Naive thymus-derived CD4-positive, alpha-beta T cell (primary cell): ENCODE measurements at regions of chr5 and their contacts with region 1.

Region 1: GRCh38 chr5:141734501-141735230 is 52.6 kb upstream of the ARAP3 start:
- DNase-seq: peak in 6 of 9 donors; percentile 11 to 39 (median 22)
- ATAC-seq: no peak
- H3K4me3 ChIP-seq: no peak overlapping the region
- H3K4me3 Mint-ChIP-seq: no peak overlapping the region
- H3K27ac ChIP-seq: no peak overlapping the region
- H3K27ac Mint-ChIP-seq: no peak overlapping the region
- H3K4me1 ChIP-seq: no peaks in the 10 kb centered on the region
- H3K4me1 Mint-ChIP-seq: peaks cover 0 to under 1% (median 0%) of the 10 kb centered on the region in 7 donors
- H3K27me3 ChIP-seq: peaks cover 0 to 2% of the 10 kb centered on the region in 2 donors
- H3K27me3 Mint-ChIP-seq: peaks cover 9 to 51% (median 39%) of the 10 kb centered on the region in 5 donors

Region 2: GRCh38 chr5:141753971-141754713 is 19.5 kb after region 1 on chr5:
- CTCF ChIA-PET with region 1: no interaction called
- POLR2A ChIA-PET with region 1: no interaction called
- intact Hi-C with region 1: loop called in 1 of 2 experiments (anchors 1 kb)
- DNase-seq: peak in 4 of 9 donors; percentile 4 to 28 (median 12)
- ATAC-seq: no peak
- H3K4me3 ChIP-seq: no peak overlapping the region
- H3K4me3 Mint-ChIP-seq: peak overlapping the region in 1 of 10 donors; percentile 21
- H3K27ac ChIP-seq: no peak overlapping the region
- H3K27ac Mint-ChIP-seq: peak overlapping the region in 1 of 9 donors; percentile 67
- H3K4me1 ChIP-seq: no peaks in the 10 kb centered on the region
- H3K4me1 Mint-ChIP-seq: peaks cover 0 to 18% (median 0%) of the 10 kb centered on the region in 7 donors
- H3K27me3 ChIP-seq: no peaks in the 10 kb centered on the region
- H3K27me3 Mint-ChIP-seq: peaks cover 64 to 89% (median 80%) of the 10 kb centered on the region in 5 donors